GM13977 (cell line): ENCODE measurements at regions of chr19 and their contacts with region 1.

Region 1: GRCh38 chr19:33110137-33110910 is 21.6 kb upstream of the WDR88 start:
- DNase-seq: no peak
- CTCF ChIP-seq: no peak

Region 2: DNA sequence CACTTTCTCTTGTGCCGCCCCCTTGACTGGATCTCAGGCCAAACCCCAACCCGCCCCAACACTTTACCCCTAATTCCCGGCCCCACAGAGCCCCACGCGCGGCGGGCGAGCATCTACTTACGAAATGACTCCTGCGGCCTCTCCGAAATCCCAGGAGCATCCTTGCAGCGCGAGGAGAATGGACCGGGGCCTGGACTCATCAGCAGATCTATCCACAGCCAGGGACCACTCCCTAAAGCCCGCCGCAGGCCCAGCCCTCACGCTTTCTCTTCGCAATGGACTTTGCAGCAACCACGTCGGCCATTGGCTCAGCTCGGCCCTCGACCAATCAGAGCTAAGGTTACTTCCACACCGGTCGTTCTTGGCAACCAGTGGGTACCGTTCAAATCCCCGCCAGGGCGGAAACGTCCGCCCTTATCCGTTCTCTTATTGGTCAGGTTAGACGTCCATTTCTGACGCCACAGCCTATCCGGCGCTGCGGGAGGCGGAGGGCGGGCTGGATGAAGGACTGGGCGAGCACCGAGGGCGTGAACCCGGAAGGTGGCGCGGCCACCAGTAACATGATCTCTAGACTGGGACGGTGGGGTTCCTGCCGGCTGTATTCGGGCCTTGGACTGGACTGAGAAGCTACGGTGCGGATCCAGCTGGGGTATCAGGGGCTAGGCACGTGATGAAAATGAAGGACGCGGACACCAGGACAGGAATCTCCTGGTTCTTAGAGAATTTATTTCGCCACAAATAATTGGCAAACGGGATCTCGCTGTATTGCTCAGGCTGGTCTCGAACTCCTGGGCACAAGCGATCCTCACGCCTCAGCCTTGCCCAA is 138.4 kb before region 1 on chr19 and contains the starts of genes CEP89 and FAAP24:
- in situ Hi-C with region 1: loop called (anchors 10 kb)
- DNase-seq: peak; percentile 97
- CTCF ChIP-seq: no peak

Region 3: DNA sequence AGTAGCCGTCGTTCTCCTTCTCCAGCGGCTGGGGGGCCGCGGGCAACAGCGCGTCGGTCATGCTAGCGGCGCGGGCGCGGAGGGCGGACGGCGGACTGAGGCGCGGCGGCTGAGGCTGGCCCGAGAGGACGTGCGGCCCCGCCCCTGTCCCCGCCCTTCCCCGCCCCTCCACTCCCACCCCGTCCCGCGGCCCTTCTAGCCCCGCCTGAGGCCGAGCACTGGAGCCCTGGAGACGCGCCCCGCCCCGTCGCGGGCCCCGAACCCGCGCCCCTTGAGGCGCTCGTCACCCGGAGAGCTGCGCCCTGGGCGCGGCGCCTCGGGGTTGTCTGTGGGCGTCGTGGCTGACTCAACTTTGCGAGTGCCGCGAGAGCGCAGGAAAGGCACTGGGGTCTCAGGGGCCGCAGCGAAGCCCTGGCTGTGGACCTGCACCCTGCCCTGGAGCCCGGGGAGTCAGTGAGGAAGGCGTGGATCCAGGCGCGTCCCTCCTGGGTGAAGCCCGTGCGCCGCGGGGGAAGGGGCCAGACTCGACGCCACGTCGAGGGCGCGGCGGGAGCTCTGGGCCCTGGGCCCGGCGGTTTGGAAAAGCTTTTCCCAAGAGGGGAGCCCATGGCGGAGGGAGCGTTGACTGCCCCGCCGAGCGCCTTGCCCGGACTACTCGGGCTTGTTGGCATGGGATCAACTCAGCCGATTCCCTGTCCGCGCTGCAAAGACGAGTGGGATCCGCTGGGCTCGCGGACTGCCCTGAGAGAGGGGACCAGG is 45.4 kb before region 1 on chr19 and contains the start of gene RHPN2:
- in situ Hi-C with region 1: no loop called
- DNase-seq: peak; percentile 90
- CTCF ChIP-seq: no peak

Region 4: DNA sequence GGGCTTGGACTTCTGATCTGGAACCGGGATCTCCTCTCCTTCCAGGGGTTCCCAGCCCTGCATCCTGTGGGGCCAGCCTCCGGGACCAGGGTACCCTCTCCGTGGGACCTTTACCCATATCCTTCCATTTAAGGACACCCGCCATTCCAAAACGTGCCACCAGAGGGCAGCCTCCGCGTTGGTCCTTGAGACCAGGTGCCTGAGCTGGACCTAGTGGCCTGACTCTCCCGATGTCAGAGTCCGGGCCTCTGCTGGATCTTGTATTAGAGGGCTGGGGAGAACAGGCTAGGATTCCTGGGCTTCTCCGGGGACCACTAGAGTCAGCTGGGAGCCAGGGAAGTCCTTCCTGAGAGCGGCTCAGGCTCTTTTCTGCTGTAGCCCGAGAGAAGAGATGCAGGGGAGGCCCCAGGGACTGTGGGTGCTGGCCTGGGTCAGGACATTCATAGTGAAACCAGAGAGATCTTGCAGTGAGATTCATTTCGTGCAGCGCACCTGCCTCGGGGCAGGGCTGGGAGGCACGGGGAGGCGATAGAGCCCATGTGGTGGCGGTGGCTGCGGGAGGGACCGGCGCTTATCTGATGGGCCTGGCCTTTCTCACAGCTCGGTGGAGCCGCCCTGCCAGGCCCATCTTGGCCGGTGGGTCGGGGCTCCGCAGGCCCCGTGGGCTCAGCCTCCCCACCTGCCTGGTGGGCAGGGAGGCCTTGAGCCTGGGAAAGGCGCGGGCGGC is 125.1 kb after region 1 on chr19:
- in situ Hi-C with region 1: no loop called
- DNase-seq: peak; percentile 94
- CTCF ChIP-seq: peak; percentile 92